Left lung (tissue), 14 donors: ENCODE measurements at regions of chr10 and their contacts with region 1.

Region 1: DNA sequence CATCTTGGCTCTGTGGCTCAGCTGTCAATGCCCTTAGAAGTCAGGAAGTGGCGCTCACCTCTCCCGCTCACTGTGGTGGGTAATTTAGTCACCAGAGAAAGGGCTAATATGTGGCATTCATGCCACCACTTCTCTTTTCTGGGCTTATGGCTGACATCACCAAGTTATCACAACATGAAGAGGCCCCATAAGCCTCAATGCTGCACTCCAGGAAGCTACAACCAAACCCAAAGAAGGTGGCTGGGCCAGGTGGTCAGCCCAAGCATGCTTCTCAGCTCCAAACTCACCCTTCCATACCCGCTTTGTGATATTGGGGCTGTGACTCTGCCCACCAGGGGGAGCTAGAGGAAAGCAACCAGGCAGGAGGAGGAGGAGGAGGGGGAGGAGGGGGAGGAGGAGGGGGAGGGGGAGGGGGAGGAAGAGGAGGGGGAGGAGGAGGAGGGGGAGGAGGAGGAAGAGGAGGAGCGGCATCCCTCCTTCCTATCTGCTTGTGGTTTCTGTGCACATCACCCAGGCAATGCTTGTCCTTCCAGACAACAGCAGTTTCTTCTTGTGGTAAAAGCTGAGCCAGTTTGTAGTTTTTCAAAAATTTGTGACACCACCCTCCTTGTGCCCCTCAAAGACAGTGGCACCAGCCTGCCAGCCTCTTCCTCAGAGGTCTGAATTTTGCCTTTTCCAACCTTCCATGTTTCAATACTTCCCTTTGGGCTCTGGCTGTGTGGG is 42.1 kb downstream of the CYP26A1 start:
- DNase-seq: peak in 3 of 4 donors; percentile 8 to 54 (median 44)
- ATAC-seq: peak; percentile 88
- H3K4me3 ChIP-seq: no peak overlapping the region
- H3K27ac ChIP-seq: no peak overlapping the region
- H3K4me1 ChIP-seq: no peaks in the 10 kb centered on the region
- H3K27me3 ChIP-seq: peaks cover 0 to 9% of the 10 kb centered on the region in 2 donors
- CTCF ChIP-seq: peak in 1 of 2 donors; percentile 45

Region 2: DNA sequence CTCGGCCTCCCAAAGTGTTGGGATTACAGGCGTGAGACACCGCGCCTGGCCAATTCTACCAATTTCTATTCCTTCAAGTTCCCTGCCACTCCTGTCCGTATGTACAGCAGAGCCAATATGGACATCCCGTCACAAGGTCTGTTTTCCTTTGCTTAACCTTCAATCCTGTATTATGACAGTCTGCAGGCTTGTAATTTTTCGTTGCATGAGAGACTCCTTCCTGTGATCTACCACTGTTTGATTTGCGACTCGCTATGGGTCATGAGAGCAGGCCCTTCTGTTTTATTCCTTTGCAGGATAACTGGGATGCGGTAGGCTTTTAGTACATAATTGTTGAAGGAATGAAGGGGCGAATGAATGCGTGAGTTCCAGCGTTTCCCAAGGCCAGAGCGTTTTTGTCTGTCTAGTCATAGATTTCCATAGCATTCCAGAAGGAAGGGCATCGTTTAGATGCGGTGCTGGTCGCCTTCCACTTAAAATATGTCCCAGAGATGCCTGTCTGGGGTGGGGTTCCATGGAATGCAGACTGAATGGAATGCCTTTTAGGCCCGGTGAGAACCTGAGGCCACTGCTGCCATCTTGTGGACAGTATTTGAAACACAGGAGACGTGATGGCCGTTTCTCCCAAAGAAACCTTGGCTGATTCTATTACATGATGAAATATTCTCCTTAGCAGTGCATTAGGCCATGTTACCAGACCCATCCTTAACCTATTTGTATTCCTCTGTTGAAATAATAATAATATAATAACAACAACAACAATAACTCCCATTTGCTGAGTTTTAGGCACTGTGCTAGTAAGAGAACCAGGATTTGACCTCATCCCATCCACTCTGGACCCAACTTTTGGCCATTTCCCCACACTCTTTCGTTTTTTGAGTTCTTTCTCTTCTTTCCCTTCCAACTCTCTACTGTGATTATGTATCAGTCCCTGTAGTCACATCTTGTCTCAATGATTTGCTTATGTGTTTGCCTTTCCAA is 173.1 kb after region 1 on chr10:
- intact Hi-C with region 1: loop called in 1 of 2 experiments (anchors 10 kb)
- DNase-seq: peak in 3 of 4 donors; percentile 65 to 78 (median 72)
- ATAC-seq: peak; percentile 99
- H3K4me3 ChIP-seq: no peak overlapping the region
- H3K27ac ChIP-seq: no peak overlapping the region
- H3K4me1 ChIP-seq: peaks cover 0 to 3% of the 10 kb centered on the region in 2 donors
- H3K27me3 ChIP-seq: no peaks in the 10 kb centered on the region
- CTCF ChIP-seq: peak; percentile 68 to 86